ENCODE measurements at regions of chr3 and their contacts with region 1.

Region 1: GRCh38 chr3:14921078-14921616 is 26.2 kb upstream of the NR2C2 start:
- DNase-seq: peak; percentile 42
- H3K4me3 ChIP-seq: no peak overlapping the region
- CTCF ChIP-seq: peak; percentile 95

Region 2: DNA sequence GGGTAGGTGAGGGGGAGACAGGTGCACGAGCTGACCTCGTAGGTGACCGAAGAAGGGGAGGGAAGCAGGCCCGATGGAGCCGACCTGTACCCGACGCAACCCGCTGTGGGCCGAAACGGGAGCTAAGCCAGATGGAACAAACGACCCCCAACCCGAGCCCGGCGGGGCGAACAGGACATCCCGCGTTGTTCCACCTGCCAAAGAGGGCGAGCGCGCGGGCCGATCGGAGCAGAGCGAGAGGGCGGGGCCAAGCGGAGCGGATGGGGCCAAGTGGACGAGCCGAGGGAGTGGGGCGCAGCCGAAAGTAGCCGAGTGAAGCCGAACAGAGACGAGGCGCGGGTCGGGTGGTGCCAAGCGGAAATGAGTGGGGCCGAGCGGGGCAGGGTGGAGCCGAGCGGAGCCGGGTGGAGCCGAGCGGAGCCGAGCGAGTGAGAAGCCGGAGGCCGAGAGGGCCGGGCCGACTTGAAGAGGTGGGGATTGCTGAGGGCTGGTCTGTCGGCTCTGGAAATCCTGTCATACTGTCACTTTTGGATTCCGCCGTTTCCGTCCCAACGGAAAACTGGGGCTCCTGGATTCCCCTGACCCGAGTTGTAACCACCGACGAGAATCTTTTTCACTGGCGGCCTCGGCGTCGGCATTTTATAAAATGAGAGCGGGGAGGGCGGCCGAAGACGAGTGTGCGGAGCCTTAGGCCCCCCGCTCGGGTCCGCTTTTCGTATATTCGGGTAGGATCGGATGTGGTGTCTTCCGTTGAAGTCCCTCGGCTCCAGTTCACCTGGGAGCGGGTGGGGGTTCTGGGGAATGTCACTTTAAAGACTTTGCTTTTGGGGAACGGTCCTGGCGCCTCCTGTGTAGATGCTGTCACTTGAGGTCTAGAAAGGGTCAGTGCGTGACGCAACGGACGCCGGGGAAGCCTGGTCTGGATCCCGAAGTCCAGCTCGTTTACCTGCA is 1025.7 kb before region 1 on chr3:
- CTCF ChIA-PET with region 1: interaction called, 11 read pairs
- POLR2A ChIA-PET with region 1: no interaction called
- DNase-seq: peak; percentile 17
- H3K4me3 ChIP-seq: peak overlapping the region; percentile 61
- CTCF ChIP-seq: no peak

Region 3: DNA sequence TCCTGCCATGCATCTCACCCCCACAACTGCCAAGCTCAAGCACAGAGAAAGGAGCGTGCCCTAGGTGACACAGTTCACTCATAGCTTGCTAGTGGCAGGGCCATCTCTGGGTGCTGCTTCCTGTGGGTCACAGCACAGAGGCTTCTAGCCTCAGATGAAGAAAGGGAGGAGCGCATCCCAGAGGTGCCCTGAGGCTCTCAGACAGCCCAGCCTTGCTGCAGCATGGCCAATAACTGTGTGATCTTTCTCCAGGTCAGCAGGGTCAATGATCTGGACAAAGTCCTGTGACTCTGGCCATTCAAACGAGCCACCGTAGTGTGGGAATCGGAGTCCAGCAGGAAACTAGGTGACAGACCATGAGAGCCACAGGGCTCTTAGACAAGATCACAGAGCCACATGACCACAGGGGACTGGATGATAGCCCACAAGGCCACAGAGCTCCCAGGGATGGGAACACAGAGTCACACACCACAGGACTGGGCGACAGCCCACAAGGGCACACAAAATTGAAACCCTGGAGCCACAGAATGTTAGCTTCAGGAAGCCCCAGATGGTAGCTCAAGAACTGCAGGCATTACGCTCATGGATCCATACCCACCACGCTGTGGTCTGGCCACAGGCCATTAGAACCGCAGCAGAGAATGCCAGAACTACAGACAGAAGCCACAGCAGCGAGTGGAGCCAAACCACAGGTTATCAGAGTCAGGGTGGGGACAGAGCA is 355.1 kb before region 1 on chr3:
- CTCF ChIA-PET with region 1: no interaction called
- POLR2A ChIA-PET with region 1: no interaction called
- DNase-seq: no peak
- H3K4me3 ChIP-seq: no peak overlapping the region
- CTCF ChIP-seq: no peak

Region 4: GRCh38 chr3:14672588-14672987 is 248.6 kb before region 1 on chr3:
- CTCF ChIA-PET with region 1: interaction called, 272 read pairs
- POLR2A ChIA-PET with region 1: no interaction called
- DNase-seq: no peak
- H3K4me3 ChIP-seq: no peak overlapping the region
- CTCF ChIP-seq: no peak

Region 5: GRCh38 chr3:14933820-14934425 is 12.8 kb after region 1 on chr3:
- CTCF ChIA-PET with region 1: interaction called, 24 read pairs
- POLR2A ChIA-PET with region 1: no interaction called
- DNase-seq: no peak
- H3K4me3 ChIP-seq: no peak overlapping the region
- CTCF ChIP-seq: no peak

Region 6: GRCh38 chr3:14959359-14959943 is 38.3 kb after region 1 on chr3:
- CTCF ChIA-PET with region 1: no interaction called
- POLR2A ChIA-PET with region 1: no interaction called
- DNase-seq: no peak
- H3K4me3 ChIP-seq: no peak overlapping the region
- CTCF ChIP-seq: no peak

Region 7: GRCh38 chr3:15051531-15051930 is 130.4 kb after region 1 on chr3:
- CTCF ChIA-PET with region 1: interaction called, 12 read pairs
- POLR2A ChIA-PET with region 1: no interaction called
- DNase-seq: no peak
- H3K4me3 ChIP-seq: no peak overlapping the region
- CTCF ChIP-seq: peak; percentile 69

Region 8: DNA sequence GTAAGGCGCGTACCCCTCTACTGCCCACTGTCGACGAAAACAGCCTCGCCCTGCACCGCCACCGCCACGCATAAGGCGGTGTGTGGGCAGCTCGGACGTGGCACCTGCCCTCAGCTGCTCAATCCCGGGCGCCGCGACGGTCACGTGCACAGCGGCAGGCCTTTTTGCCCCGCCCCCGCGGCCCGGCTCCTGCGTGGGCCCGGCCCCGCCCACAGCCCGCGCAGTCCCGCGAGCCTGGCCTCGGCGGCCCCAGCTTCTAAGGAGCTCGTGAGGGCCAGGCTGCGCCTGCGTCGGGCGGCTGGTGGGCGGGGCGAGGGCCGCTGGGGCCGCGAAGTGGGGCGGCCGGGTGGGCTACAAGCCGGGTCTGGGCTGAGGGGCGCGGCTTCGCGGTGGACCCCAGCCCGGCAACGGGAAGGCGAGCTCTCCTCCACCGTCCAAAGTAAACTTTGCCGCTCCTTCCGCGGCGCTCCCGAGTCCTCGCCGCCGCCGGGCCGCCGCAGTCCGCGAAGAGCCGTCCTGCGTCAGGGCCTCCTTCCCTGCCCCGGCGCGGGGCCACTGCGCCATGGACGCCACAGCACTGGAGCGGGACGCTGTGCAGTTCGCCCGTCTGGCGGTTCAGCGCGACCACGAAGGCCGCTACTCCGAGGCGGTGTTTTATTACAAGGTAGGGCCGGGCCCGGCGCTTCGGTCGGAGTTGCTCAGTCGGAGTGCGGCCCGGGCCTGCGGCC is 285.0 kb after region 1 on chr3 and contains the start of gene CAPN7:
- CTCF ChIA-PET with region 1: interaction called, 26 read pairs
- POLR2A ChIA-PET with region 1: no interaction called
- DNase-seq: peak; percentile 46
- H3K4me3 ChIP-seq: peak within 1 kb of the TSS; percentile 86
- CTCF ChIP-seq: peak; percentile 55

Region 9: GRCh38 chr3:15223685-15224572 is 302.8 kb after region 1 on chr3:
- CTCF ChIA-PET with region 1: no interaction called
- POLR2A ChIA-PET with region 1: no interaction called
- DNase-seq: no peak
- H3K4me3 ChIP-seq: no peak overlapping the region
- CTCF ChIP-seq: no peak

Measured in AG04449 (cell line).